Psoas muscle (tissue), 8 donors: ENCODE measurements at regions of chr15 and their contacts with region 1.

Region 1: DNA sequence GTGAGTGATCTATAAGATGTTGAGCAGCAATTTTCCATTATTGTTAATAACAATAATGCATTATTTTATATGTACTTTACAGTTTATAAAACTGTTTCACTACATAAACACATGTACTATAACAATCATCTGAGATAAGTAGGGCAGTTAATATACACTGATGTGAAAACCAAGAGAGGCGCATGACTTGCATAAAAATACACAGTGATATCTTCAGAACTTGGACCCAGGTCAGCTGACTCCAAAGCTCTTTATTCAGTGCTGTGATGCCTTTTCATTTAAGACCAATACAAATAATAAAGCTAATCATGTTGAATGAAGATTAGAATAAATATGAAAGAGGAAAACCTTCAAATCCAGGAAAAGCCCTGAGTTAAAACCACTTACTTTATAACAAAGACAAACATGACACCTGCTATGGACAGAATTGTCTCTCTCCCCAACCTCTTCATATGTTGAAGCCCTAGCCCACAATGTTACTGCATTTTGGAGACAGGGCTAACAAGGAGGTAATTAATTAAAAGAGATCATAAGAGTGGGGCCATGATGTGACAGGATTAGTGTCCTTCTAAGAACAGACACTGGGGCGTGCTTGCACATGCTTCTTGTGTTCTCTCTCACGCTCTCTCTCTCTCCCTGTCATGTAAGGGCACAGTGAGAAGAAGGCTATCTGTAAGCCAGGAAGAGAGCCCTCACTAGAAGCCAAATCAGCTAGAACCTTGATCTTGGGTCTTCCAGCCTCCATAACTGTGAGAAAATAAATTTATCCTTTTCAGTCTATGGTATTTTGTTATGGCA is 55.8 kb upstream of the TSPAN3 start:
- DNase-seq: no peak
- ATAC-seq: peak; percentile 67 to 91 (median 80)
- H3K4me3 ChIP-seq: no peak overlapping the region
- H3K27ac ChIP-seq: no peak overlapping the region
- H3K4me1 ChIP-seq: no peaks in the 10 kb centered on the region
- H3K27me3 ChIP-seq: no peaks in the 10 kb centered on the region
- CTCF ChIP-seq: no peak

Region 2: DNA sequence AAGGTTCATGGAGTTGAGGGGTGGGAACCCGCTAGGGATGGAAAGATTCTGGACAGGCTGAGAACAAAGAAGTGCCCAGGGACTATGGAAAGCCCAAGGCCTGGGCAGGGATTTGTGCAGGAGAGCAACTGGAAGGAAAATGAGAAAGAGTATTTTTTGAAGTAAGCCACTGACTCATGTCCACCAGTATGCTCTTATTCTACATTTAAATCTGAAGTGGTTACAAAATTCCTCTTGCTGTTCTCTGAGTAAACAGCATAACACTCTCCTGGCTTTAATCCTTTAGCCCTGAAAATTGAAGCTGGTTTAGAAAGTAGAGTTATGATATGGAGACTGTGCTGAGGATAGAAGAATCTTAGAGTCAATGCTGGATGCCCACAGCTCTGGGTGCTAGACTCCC is 625.0 kb before region 1 on chr15:
- intact Hi-C with region 1: no loop called
- DNase-seq: no peak
- ATAC-seq: no peak
- H3K4me3 ChIP-seq: no peak overlapping the region
- H3K27ac ChIP-seq: no peak overlapping the region
- H3K4me1 ChIP-seq: no peaks in the 10 kb centered on the region
- H3K27me3 ChIP-seq: no peaks in the 10 kb centered on the region
- CTCF ChIP-seq: no peak

Region 3: DNA sequence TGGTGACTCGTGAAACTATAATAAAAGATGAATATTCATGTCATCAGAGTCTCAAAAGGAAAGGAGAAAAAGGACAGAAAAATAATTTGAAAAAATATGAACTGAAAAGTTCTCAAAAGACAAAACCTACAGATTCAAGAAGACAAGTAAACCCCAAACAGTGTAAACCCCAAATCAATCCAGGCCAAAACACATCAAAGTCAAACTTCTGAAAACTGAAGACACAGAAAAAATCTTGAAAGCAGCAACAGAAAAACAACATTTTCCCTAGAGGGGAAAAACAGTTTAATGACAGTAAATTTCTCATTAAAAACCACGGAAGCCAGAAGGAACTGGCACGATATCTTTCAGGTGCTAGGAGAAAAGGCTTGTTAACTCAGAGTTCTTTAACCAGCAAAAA is 149.4 kb after region 1 on chr15:
- intact Hi-C with region 1: loop called in 1 of 2 experiments (anchors 10 kb)
- DNase-seq: no peak
- ATAC-seq: no peak
- H3K4me3 ChIP-seq: no peak overlapping the region
- H3K27ac ChIP-seq: no peak overlapping the region
- H3K4me1 ChIP-seq: no peaks in the 10 kb centered on the region
- H3K27me3 ChIP-seq: no peaks in the 10 kb centered on the region
- CTCF ChIP-seq: no peak

Region 4: GRCh38 chr15:77419836-77420609 is 293.3 kb after region 1 on chr15 and contains the start of gene PEAK1:
- intact Hi-C with region 1: loop called in 1 of 2 experiments (anchors 10 kb)
- DNase-seq: peak; percentile 100
- ATAC-seq: peak; percentile 96 to 99 (median 98)
- H3K4me3 ChIP-seq: peak within 1 kb of the TSS; percentile 91
- H3K27ac ChIP-seq: peak within 1 kb of the TSS; percentile 97
- H3K4me1 ChIP-seq: peaks cover 58% of the 10 kb centered on the region
- H3K27me3 ChIP-seq: no peaks in the 10 kb centered on the region
- CTCF ChIP-seq: no peak
- total RNA-seq, gene PEAK1: 25.3 to 32.1 (median 28.8) TPM